Sciatic nerve (tissue), 2 donors: ENCODE measurements at regions of chr10 and their contacts with region 1.

Region 1: GRCh38 chr10:82668221-82668895 is 793.4 kb downstream of the NRG3 start:
- DNase-seq: no peak
- ATAC-seq: no peak

Region 2: GRCh38 chr10:82037076-82037475 is 631.3 kb before region 1 on chr10:
- intact Hi-C with region 1: no loop called
- DNase-seq: peak; percentile 58
- ATAC-seq: peak; percentile 51

Region 3: DNA sequence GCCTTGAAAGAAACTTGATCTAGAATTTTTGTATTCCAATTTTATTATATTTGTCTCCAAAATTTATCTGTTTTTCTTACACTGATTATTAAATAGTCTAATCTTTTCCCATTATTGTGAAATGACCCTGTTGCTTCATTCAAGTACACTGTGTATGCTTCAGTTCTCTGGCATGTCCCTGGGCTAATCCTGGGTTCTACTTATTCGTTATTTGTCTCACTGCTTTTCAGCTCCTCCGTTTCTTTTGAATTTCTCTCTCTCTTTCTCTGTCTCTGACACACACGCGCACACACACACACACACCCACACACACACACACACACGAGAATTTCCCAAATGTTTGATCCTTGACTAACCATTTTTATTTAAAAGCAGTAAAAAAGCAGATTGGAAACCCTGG is 24.8 kb before region 1 on chr10:
- intact Hi-C with region 1: loop called (anchors 1 kb)
- DNase-seq: no peak
- ATAC-seq: no peak

Region 4: DNA sequence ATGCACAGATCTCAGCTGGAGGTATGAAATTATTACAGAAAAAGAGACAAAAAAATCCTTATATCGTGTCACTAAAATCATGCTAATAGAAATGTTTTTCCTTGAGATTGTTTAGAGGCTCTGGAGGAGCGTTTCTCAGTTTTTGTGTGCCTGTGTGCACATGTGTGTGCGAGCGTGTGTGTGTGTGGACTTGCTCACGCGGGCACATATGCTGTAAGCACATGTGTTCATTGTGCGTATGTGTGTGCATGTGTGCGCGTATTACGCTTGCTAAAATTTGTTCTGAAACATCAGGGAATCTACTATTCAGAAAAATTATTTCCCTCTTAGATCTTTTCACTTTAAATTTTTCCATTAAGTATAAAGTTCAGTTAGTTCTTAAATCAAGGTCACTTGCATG is 317.9 kb after region 1 on chr10:
- intact Hi-C with region 1: no loop called
- DNase-seq: no peak
- ATAC-seq: no peak